ENCODE measurements at regions of chr1 and their contacts with region 1.

Region 1: DNA sequence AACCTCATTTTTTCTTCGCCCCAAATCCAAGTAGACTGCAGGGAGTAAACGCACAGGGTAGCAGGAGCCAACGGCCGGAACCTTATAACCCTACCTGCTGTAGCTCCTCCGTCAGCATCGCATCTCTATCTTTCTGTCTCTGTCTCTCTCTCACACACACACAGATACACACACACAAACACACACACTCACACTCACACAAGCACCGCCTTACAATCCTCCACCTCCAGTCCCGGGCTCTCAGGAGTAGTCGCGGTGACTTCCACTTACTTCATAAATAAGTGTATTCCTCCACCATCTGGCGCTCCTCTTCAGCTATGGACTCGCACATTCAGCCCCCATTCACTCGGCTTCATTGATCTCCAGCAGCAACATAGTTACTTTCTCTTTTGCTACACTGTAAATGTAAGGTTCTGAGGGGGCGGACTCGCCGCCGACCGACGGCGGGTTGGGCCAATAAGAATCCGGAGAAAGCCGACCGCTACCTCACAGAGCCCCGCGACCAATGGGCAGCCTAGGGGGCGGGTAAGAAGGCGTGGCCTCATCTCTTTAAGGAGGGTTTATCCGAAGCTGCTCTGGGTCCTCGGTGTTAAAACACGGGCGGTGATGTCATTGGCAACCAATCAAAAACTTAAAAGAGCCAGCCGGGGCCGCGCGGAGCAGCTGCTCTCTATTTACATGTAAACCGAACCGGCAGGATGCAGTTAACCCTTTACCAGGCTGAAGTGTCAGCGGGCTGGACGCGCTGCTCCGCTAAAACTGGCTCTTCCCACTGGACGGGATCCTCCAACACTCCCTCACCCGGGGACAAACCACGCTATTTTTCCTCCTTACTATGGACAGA is at the start of gene DUSP10:
- DNase-seq: peak; percentile 99 to 100
- ATAC-seq: peak; percentile 85 to 89
- H3K4me3 ChIP-seq: peak within 1 kb of the TSS; percentile 71 to 93 (median 82)
- H3K27ac ChIP-seq: peak within 1 kb of the TSS; percentile 95 to 99 (median 98)
- H3K4me1 ChIP-seq: peaks cover 44 to 45% of the 10 kb centered on the region in 2 donors
- H3K27me3 ChIP-seq: no peaks in the 10 kb centered on the region
- CTCF ChIP-seq: peak in 1 of 5 experiments; percentile 14
- POLR2A ChIP-seq: peak; percentile 65 to 95
- total RNA-seq, gene DUSP10: 2.9 to 7.0 (median 5.9) TPM

Region 2: GRCh38 chr1:220914283-220915116 is 827.4 kb before region 1 on chr1:
- in situ Hi-C with region 1: no loop called
- intact Hi-C with region 1: no loop called
- DNase-seq: no peak
- ATAC-seq: no peak
- H3K4me3 ChIP-seq: no peak overlapping the region
- H3K27ac ChIP-seq: no peak overlapping the region
- H3K4me1 ChIP-seq: peaks cover 0 to 11% of the 10 kb centered on the region in 2 donors
- H3K27me3 ChIP-seq: no peaks in the 10 kb centered on the region
- CTCF ChIP-seq: no peak
- POLR2A ChIP-seq: no peak

Region 3: DNA sequence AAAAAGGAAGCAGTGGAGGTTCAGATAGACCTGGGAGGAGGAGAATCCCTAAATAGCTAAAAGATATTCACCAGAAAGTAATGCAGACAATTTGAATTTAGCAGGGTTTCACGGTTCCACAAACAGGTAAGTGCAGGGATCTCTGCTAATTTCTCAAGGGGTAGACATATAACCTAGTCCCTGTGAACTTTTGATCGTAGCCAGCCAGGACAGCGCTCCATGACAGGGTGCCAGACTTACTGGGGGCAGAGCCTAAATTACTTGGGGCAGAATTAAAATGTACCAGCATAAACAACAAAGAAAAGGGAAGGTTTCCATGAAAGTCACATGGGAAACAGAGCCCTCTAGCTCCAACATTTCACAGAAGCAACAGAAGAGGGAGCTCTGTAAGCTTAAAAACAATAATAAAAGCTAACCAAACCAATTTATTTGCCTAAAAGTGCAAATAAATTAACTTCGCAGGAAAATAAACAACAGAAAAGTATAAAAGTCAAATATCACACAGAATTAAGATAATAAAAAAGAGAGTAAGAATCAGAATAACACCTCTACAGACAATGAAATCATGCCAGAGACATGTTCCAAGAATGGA is 198.3 kb before region 1 on chr1:
- in situ Hi-C with region 1: no loop called
- intact Hi-C with region 1: loop called (anchors 2 kb)
- DNase-seq: no peak
- ATAC-seq: no peak
- H3K4me3 ChIP-seq: no peak overlapping the region
- H3K27ac ChIP-seq: no peak overlapping the region
- H3K4me1 ChIP-seq: no peaks in the 10 kb centered on the region
- H3K27me3 ChIP-seq: no peaks in the 10 kb centered on the region
- CTCF ChIP-seq: peak in 4 of 5 experiments; percentile 32 to 57 (median 52)
- POLR2A ChIP-seq: no peak

Region 4: DNA sequence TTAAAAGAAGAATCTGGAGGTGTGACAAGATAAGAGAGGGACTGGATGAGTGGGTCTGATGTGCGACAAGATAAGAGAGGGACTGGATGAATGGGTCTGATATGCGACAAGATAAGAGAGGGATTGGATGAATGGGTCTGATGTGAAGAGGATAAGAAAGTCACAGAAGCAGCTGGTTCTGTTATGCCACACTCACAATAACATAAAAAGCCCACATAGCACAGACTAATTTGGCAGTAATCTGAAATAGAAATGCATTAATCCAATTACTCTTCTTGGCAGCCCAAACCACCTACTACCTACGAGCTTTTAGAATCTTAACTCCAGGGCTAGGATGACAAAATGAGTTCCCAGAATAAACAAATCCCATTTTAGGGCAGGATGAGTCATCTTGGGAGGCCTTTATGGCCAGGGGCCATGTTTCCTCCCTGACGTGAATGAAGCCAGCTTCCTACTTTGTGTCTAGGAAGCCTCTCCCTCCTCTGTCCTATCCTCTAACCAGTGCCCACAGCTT is 129.6 kb before region 1 on chr1:
- in situ Hi-C with region 1: no loop called
- intact Hi-C with region 1: loop called (anchors 2 kb)
- DNase-seq: peak; percentile 37 to 81
- ATAC-seq: peak; percentile 100
- H3K4me3 ChIP-seq: no peak overlapping the region
- H3K27ac ChIP-seq: peak overlapping the region; percentile 53 to 75 (median 66)
- H3K4me1 ChIP-seq: peaks cover 12% of the 10 kb centered on the region in 2 donors
- H3K27me3 ChIP-seq: no peaks in the 10 kb centered on the region
- CTCF ChIP-seq: no peak
- POLR2A ChIP-seq: no peak

Region 5: GRCh38 chr1:221863635-221864034 is 121.7 kb after region 1 on chr1:
- in situ Hi-C with region 1: no loop called
- intact Hi-C with region 1: loop called (anchors 2 kb)
- DNase-seq: no peak
- ATAC-seq: peak; percentile 31 to 54
- H3K4me3 ChIP-seq: no peak overlapping the region
- H3K27ac ChIP-seq: peak overlapping the region; percentile 73 to 80 (median 79)
- H3K4me1 ChIP-seq: peaks cover 12 to 17% of the 10 kb centered on the region in 2 donors
- H3K27me3 ChIP-seq: no peaks in the 10 kb centered on the region
- CTCF ChIP-seq: no peak
- POLR2A ChIP-seq: no peak

Region 6: GRCh38 chr1:222171005-222171404 is 429.1 kb after region 1 on chr1:
- in situ Hi-C with region 1: no loop called
- intact Hi-C with region 1: loop called (anchors 10 kb)
- DNase-seq: no peak
- ATAC-seq: peak; percentile 84 to 88
- H3K4me3 ChIP-seq: no peak overlapping the region
- H3K27ac ChIP-seq: no peak overlapping the region
- H3K4me1 ChIP-seq: peaks cover 0 to 4% of the 10 kb centered on the region in 2 donors
- H3K27me3 ChIP-seq: no peaks in the 10 kb centered on the region
- CTCF ChIP-seq: peak; percentile 39 to 63 (median 46)
- POLR2A ChIP-seq: no peak

Region 7: DNA sequence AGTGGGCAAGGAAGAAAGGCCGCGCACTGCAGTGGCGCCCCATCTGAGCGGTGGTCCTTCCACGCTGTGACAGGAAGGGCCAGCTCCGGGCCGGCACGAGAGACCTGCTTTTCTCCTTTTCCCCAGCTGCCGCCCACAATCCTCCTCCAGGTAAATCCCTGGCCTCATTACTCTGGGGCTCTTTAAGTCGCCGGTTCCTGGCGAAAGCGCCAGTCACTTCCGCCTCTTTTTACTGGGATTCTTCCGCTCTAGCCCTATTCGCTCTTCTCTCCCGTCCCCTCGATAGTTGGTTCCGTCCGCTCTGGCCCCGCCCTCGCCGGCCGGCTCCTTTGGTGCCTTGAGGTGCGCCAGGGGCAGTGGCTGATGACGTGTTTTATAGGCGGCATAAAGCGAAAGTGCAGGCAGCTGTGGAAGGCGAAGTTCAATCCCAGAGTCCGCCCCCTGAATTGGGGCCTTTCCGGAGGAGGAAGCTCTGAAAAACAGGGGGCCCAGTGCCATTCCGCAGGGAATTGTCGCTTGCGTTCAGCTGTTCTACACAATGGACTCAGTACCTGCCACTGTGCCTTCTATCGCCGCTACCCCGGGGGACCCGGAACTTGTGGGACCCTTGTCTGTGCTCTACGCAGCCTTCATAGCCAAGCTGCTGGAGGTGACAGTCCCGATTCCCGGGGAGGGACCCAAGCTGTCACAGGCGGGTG is 902.2 kb after region 1 on chr1:
- in situ Hi-C with region 1: loop called (anchors 25 kb)
- intact Hi-C with region 1: no loop called
- DNase-seq: peak; percentile 94 to 98
- ATAC-seq: peak; percentile 99
- H3K4me3 ChIP-seq: peak overlapping the region; percentile 77 to 97 (median 88)
- H3K27ac ChIP-seq: peak overlapping the region; percentile 86 to 96 (median 90)
- H3K4me1 ChIP-seq: peaks cover 12 to 15% of the 10 kb centered on the region in 2 donors
- H3K27me3 ChIP-seq: no peaks in the 10 kb centered on the region
- CTCF ChIP-seq: peak in 1 of 5 experiments; percentile 14
- POLR2A ChIP-seq: peak; percentile 68 to 72

Measured in gastrocnemius medialis (tissue), 4 donors.